ENCODE measurements at regions of chr1 and their contacts with region 1.

Region 1: GRCh38 chr1:99645699-99646531 is at the start of gene PALMD:
- DNase-seq: peak; percentile 86
- H3K4me3 ChIP-seq: peak within 1 kb of the TSS; percentile 68 to 99 (median 90)
- H3K27ac ChIP-seq: peak within 1 kb of the TSS; percentile 94
- H3K4me1 ChIP-seq: peaks cover 42% of the 10 kb centered on the region
- H3K27me3 ChIP-seq: no peaks in the 10 kb centered on the region
- CTCF ChIP-seq: no peak
- POLR2A ChIP-seq: peak; percentile 93
- total RNA-seq, gene PALMD: 137 and 140 TPM in 2 replicates

Region 2: DNA sequence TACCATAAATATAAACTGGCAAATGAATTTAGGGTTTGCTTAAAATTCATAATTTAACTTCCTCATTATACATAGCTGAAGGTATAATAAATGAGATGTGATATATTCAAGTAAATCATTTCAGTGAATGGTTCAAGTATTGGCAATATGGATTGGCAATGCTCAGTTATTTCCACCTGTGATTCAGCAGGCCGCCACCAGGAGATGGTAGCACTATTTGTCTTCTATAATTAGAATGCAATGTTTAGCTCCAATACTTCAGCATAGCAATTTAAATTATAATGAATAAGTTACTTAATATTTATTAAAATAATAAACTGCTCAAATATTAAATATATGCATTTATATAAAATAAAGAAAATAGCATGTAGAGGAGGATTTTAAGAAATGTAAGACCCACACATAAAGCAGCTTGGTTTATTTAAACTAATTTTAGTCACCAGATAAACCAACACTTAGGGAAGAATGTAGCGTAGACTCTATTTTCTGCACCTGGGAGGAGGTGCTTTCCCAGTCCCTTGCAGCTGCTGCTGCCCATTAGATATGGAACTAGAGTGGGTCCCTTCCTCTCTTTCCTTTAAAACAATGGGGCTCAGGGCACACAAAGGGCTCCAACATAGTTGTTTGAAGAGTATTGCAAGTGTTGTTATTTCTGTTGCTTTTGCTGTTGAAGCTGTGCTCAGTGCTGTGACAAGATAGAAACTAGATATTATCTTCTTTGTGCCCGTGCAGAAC is 319.5 kb before region 1 on chr1:
- CTCF ChIA-PET with region 1: interaction called, 4 read pairs
- POLR2A ChIA-PET with region 1: no interaction called
- dilution Hi-C with region 1: no loop called
- intact Hi-C with region 1: loop called (anchors 5 kb)
- DNase-seq: peak; percentile 16
- H3K4me3 ChIP-seq: no peak overlapping the region
- H3K27ac ChIP-seq: no peak overlapping the region
- H3K4me1 ChIP-seq: no peaks in the 10 kb centered on the region
- H3K27me3 ChIP-seq: no peaks in the 10 kb centered on the region
- CTCF ChIP-seq: peak in 1 of 2 donors; percentile 32
- POLR2A ChIP-seq: no peak

Region 3: DNA sequence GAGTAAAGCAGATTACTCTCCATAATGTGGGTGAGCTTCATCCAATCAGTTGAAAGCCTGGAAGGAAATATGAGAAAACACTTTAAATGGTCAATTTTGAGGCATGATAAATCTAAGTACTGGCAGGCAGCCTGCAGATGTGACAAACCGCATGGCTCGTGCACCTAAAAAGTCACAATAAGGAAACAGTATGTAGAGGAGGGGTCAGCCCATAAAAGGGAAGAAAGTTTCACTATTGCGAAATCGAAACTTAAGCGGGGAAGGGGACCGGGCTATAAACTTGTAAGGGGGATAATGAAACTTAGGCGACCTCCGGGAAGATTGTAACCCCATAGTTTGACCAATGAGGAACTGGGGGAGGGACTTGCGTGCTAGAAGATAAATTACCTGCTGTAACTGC is 271.8 kb before region 1 on chr1:
- CTCF ChIA-PET with region 1: no interaction called
- POLR2A ChIA-PET with region 1: no interaction called
- dilution Hi-C with region 1: no loop called
- intact Hi-C with region 1: no loop called
- DNase-seq: no peak
- H3K4me3 ChIP-seq: no peak overlapping the region
- H3K27ac ChIP-seq: no peak overlapping the region
- H3K4me1 ChIP-seq: no peaks in the 10 kb centered on the region
- H3K27me3 ChIP-seq: no peaks in the 10 kb centered on the region
- CTCF ChIP-seq: no peak
- POLR2A ChIP-seq: no peak

Region 4: DNA sequence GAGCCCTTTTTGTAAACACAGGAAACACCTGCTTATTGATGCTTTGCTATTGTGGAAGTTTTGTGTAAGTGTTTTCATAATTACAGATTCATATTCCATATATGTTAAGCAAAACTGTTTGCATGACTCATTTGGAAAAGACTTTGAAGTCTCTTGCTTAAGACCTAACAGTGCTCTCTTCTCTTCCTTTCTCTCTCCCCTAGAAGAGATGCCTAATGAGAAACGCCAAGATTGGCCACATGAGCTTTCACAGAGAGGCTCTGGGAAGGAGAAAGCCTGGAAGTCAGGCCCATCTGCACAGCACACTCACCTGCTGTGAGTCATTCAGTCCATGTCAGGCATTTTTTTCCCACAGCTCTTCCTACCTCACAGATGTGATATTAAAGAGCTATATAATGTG is 101.6 kb before region 1 on chr1:
- CTCF ChIA-PET with region 1: interaction called, 7 read pairs
- POLR2A ChIA-PET with region 1: interaction called, 6 read pairs
- dilution Hi-C with region 1: no loop called
- intact Hi-C with region 1: loop called (anchors 1 kb)
- DNase-seq: peak; percentile 87
- H3K4me3 ChIP-seq: no peak overlapping the region
- H3K27ac ChIP-seq: peak overlapping the region; percentile 54
- H3K4me1 ChIP-seq: peaks cover 49% of the 10 kb centered on the region
- H3K27me3 ChIP-seq: no peaks in the 10 kb centered on the region
- CTCF ChIP-seq: no peak
- POLR2A ChIP-seq: no peak

Region 5: GRCh38 chr1:99599678-99600175 is 46.2 kb before region 1 on chr1:
- CTCF ChIA-PET with region 1: interaction called, 20 read pairs
- POLR2A ChIA-PET with region 1: interaction called, 4 read pairs
- dilution Hi-C with region 1: no loop called
- intact Hi-C with region 1: loop called (anchors 1 kb)
- DNase-seq: peak; percentile 97
- H3K4me3 ChIP-seq: no peak overlapping the region
- H3K27ac ChIP-seq: peak overlapping the region; percentile 93
- H3K4me1 ChIP-seq: peaks cover 65% of the 10 kb centered on the region
- H3K27me3 ChIP-seq: no peaks in the 10 kb centered on the region
- CTCF ChIP-seq: no peak
- POLR2A ChIP-seq: no peak

Region 6: DNA sequence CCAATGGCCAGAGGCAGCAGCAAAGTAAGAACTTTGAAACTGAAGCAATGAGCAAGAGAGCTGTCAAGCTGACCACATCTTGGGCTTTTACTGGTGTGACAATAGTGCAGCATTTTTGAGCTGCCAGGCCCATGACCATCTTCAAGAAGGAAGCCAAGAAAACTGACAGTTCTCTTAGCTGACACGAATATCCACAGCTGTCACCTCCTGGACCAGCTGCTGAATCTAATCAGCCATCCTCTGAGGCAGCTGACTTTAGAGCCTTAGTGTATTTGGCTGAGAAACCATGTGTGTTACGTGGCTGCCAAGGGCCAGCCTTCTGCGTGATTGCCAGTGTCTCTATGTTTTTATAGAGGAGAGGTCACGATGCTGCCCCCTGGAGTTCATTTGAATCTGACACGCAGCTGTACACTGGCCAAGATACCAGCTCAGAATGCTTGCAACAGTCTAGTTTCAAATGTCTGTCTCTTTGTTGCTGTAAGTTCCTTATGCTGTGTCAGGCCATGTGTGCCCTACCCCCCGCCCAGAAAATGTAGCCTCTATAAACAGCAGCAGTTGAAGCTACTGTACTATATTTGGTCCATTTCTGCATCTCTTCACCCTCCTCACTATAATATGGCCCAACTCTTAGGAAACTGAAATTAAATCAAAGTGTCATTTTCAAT is 39.7 kb after region 1 on chr1:
- CTCF ChIA-PET with region 1: interaction called, 19 read pairs
- POLR2A ChIA-PET with region 1: interaction called, 17 read pairs
- dilution Hi-C with region 1: no loop called
- intact Hi-C with region 1: loop called (anchors 1 kb)
- DNase-seq: peak; percentile 95
- H3K4me3 ChIP-seq: no peak overlapping the region
- H3K27ac ChIP-seq: peak overlapping the region; percentile 48
- H3K4me1 ChIP-seq: peaks cover 57% of the 10 kb centered on the region
- H3K27me3 ChIP-seq: no peaks in the 10 kb centered on the region
- CTCF ChIP-seq: peak; percentile 63 to 67
- POLR2A ChIP-seq: peak; percentile 67

Measured in endothelial cell of umbilical vein (primary cell).